B cell (primary cell): ENCODE measurements at regions of chr3 and their contacts with region 1.

Region 1: DNA sequence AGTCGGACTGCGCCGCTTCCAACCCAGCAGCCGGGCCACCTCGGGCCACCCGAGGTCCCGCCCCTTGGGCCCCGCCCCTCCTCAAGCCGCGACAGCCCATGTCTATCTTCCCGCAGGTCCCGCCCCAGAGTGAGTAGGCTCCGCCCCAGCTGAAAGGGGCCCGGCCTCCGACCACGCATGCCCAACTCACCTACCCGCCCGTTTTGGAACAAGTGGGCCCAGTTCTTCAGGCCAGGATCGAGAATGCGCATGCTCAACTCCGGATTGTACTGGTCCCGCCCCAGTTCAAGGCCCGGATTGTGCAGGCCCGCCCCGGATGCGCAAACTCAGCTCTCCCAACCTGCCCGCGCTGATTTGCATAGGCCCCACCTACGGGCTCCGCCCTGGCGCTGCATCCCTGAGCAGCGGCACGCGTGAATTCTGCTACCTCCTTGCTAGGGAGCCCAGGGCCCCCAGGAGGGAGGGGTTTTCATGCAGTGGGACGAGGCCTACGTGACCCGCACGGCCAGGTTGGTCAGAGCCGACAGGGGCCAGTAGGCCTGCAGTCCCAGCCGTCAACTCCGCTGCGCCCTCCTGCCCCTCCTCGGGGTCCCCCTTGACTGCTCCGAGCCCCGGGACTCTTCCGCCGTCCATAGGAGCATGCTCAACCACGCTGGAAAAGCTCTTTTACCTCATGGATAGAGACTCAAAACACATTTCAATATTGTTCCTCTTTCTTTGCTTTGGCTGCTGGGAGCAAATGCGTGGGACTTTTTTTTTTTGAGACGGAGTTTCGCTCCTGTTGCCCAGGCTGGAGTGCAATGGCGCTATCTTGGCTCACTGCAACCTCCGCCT is at the start of gene PFKFB4:
- DNase-seq: peak; percentile 100
- ATAC-seq: peak; percentile 89
- H3K4me3 ChIP-seq: peak within 1 kb of the TSS; percentile 53 to 73 (median 63)
- H3K4me3 Mint-ChIP-seq: peak within 1 kb of the TSS; percentile 87
- H3K27ac ChIP-seq: peak within 1 kb of the TSS; percentile 41 to 65
- H3K27ac Mint-ChIP-seq: peak within 1 kb of the TSS; percentile 80
- H3K4me1 ChIP-seq: peaks cover 16 to 40% of the 10 kb centered on the region in 2 donors
- H3K4me1 Mint-ChIP-seq: peaks cover 33% of the 10 kb centered on the region
- H3K27me3 ChIP-seq: no peaks in the 10 kb centered on the region
- H3K27me3 Mint-ChIP-seq: no peaks in the 10 kb centered on the region
- CTCF ChIP-seq: no peak
- total RNA-seq, gene PFKFB4: 3.2 and 3.3 TPM in 2 replicates

Region 2: DNA sequence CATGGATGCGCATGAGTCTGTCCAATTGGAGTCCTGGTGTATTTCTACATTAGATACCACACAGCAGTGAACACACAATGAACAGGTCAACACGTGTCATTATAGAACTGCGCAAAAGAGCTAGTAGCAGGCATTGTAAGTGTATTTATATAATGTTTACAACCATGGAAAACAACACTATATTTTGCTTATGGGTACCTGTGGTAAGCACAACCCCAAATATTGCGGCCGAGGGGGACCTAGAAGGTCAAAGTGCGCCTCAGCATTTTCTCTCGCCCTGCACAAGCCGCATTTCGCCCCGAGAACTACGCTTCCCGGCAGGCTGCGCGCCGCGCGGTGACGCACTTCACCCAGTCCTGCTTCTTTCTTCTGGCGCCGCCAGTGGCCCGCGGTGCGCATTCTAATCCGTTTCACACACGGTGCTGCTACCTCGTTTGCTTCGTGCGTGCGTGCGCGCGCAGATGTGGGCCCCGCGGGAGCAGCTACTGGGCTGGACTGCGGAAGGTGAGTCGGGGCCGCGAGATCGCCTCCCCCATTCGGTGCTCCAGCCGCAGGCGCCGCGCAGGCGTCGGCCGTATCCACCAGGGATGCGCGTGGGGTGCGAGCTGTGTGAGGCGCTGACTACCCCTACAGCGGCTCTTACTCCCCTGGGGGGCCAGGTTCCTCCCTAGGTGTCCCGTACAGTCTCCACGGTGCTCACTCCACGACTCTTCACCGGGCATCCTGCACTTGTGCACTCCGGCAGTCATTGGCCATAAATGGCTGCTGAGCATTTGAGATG is 316.1 kb before region 1 on chr3 and contains the start of gene ZNF589:
- CTCF ChIA-PET with region 1: no interaction called
- POLR2A ChIA-PET with region 1: no interaction called
- intact Hi-C with region 1: loop called (anchors 2 kb)
- DNase-seq: peak; percentile 96
- ATAC-seq: peak; percentile 95
- H3K4me3 ChIP-seq: peak within 1 kb of the TSS; percentile 69 to 95 (median 70)
- H3K4me3 Mint-ChIP-seq: peak within 1 kb of the TSS; percentile 97
- H3K27ac ChIP-seq: peak within 1 kb of the TSS; percentile 78 to 79
- H3K27ac Mint-ChIP-seq: peak within 1 kb of the TSS; percentile 98
- H3K4me1 ChIP-seq: peaks cover 3 to 24% of the 10 kb centered on the region in 2 donors
- H3K4me1 Mint-ChIP-seq: peaks cover 24% of the 10 kb centered on the region
- H3K27me3 ChIP-seq: no peaks in the 10 kb centered on the region
- H3K27me3 Mint-ChIP-seq: no peaks in the 10 kb centered on the region
- CTCF ChIP-seq: peak; percentile 29
- total RNA-seq, gene ZNF589: 29.8 and 34.7 TPM in 2 replicates

Region 3: GRCh38 chr3:48400824-48401433 is 156.1 kb before region 1 on chr3:
- CTCF ChIA-PET with region 1: interaction called, 190 read pairs
- POLR2A ChIA-PET with region 1: no interaction called
- intact Hi-C with region 1: no loop called
- DNase-seq: peak; percentile 83
- ATAC-seq: peak; percentile 89
- H3K4me3 ChIP-seq: no peak overlapping the region
- H3K4me3 Mint-ChIP-seq: no peak overlapping the region
- H3K27ac ChIP-seq: no peak overlapping the region
- H3K27ac Mint-ChIP-seq: no peak overlapping the region
- H3K4me1 ChIP-seq: no peaks in the 10 kb centered on the region
- H3K4me1 Mint-ChIP-seq: no peaks in the 10 kb centered on the region
- H3K27me3 ChIP-seq: peaks cover 0 to under 1% (median 0%) of the 10 kb centered on the region in 4 experiments
- H3K27me3 Mint-ChIP-seq: peaks cover 8% of the 10 kb centered on the region
- CTCF ChIP-seq: peak; percentile 93

Region 4: GRCh38 chr3:48472915-48473616 is 83.9 kb before region 1 on chr3:
- CTCF ChIA-PET with region 1: interaction called, 3 read pairs
- POLR2A ChIA-PET with region 1: no interaction called
- intact Hi-C with region 1: loop called (anchors 1 kb)
- DNase-seq: peak; percentile 98
- ATAC-seq: peak; percentile 91
- H3K4me3 ChIP-seq: peak overlapping the region; percentile 59 to 95 (median 74)
- H3K4me3 Mint-ChIP-seq: peak overlapping the region; percentile 93
- H3K27ac ChIP-seq: peak overlapping the region; percentile 96 to 99
- H3K27ac Mint-ChIP-seq: peak overlapping the region; percentile 99
- H3K4me1 ChIP-seq: peaks cover 62 to 76% of the 10 kb centered on the region in 2 donors
- H3K4me1 Mint-ChIP-seq: peaks cover 66% of the 10 kb centered on the region
- H3K27me3 ChIP-seq: no peaks in the 10 kb centered on the region
- H3K27me3 Mint-ChIP-seq: no peaks in the 10 kb centered on the region
- CTCF ChIP-seq: peak; percentile 56

Region 5: GRCh38 chr3:48609088-48610005 is 52.3 kb after region 1 on chr3 and contains the start of gene UQCRC1:
- CTCF ChIA-PET with region 1: interaction called, 7 read pairs
- POLR2A ChIA-PET with region 1: no interaction called
- intact Hi-C with region 1: loop called (anchors 1 kb)
- DNase-seq: peak; percentile 95
- ATAC-seq: peak; percentile 99
- H3K4me3 ChIP-seq: peak within 1 kb of the TSS; percentile 68 to 99 (median 94)
- H3K4me3 Mint-ChIP-seq: peak within 1 kb of the TSS; percentile 100
- H3K27ac ChIP-seq: peak within 1 kb of the TSS; percentile 72 to 90
- H3K27ac Mint-ChIP-seq: peak within 1 kb of the TSS; percentile 98
- H3K4me1 ChIP-seq: peaks cover 10 to 14% of the 10 kb centered on the region in 2 donors
- H3K4me1 Mint-ChIP-seq: peaks cover 15% of the 10 kb centered on the region
- H3K27me3 ChIP-seq: no peaks in the 10 kb centered on the region
- H3K27me3 Mint-ChIP-seq: no peaks in the 10 kb centered on the region
- CTCF ChIP-seq: peak; percentile 81
- total RNA-seq, gene UQCRC1: 98.9 and 99.9 TPM in 2 replicates

Region 6: DNA sequence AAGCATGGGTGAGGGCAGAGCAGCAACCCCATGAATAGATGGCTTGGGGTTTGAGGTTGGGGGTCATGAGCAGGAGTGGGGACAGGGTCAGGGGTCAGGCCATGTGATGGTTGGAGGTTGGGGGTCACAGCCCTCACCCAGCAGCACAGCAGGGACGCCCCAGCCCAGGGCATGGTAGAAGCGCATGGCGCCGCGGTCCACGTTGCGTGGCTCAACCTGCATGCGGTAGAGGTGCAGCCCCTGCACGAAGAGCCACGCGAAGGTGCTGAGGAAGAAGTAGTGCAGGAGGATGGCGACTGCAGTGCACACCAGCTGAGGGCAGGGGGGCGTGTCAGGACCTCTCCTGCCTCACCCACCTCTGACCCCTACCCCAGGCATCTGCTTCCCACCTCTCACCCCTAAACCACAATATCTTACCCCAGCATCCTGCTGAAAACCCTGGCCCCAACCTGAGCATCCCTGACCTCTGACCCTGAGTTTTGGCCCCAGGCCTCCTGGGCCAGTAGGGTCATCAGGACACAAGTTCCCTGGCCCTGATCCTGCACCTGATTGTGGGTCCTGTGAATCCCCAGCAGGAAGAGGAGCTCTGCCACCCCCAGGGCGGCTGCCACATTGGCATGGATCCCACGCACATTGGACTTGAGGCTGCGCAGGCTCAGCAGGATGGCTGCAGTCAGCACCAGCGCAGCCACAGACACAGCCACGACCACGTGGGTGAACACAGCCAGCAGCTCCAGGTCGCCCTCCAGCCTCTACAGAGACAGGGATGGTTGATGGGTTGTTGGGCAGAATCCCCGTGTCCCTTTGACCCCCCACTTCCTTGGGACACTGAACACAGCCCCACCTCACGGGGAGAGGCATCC is 88.1 kb after region 1 on chr3:
- CTCF ChIA-PET with region 1: no interaction called
- POLR2A ChIA-PET with region 1: no interaction called
- intact Hi-C with region 1: no loop called
- DNase-seq: no peak
- ATAC-seq: no peak
- H3K4me3 ChIP-seq: no peak overlapping the region
- H3K4me3 Mint-ChIP-seq: no peak overlapping the region
- H3K27ac ChIP-seq: no peak overlapping the region
- H3K27ac Mint-ChIP-seq: no peak overlapping the region
- H3K4me1 ChIP-seq: no peaks in the 10 kb centered on the region
- H3K4me1 Mint-ChIP-seq: no peaks in the 10 kb centered on the region
- H3K27me3 ChIP-seq: peaks cover 0 to 11% (median 0%) of the 10 kb centered on the region in 4 experiments
- H3K27me3 Mint-ChIP-seq: no peaks in the 10 kb centered on the region
- CTCF ChIP-seq: no peak

Region 7: GRCh38 chr3:48716982-48717746 is 160.2 kb after region 1 on chr3 and contains the start of gene IP6K2:
- CTCF ChIA-PET with region 1: no interaction called
- POLR2A ChIA-PET with region 1: no interaction called
- intact Hi-C with region 1: loop called (anchors 1 kb)
- DNase-seq: peak; percentile 97
- ATAC-seq: peak; percentile 99
- H3K4me3 ChIP-seq: peak within 1 kb of the TSS; percentile 90 to 99 (median 95)
- H3K4me3 Mint-ChIP-seq: peak within 1 kb of the TSS; percentile 98
- H3K27ac ChIP-seq: peak within 1 kb of the TSS; percentile 74 to 77
- H3K27ac Mint-ChIP-seq: peak within 1 kb of the TSS; percentile 93
- H3K4me1 ChIP-seq: peaks cover 18 to 20% of the 10 kb centered on the region in 2 donors
- H3K4me1 Mint-ChIP-seq: peaks cover 33% of the 10 kb centered on the region
- H3K27me3 ChIP-seq: no peaks in the 10 kb centered on the region
- H3K27me3 Mint-ChIP-seq: no peaks in the 10 kb centered on the region
- CTCF ChIP-seq: no peak
- total RNA-seq, gene IP6K2: 138 and 140 TPM in 2 replicates

Region 8: GRCh38 chr3:48851407-48851806 is 294.4 kb after region 1 on chr3:
- CTCF ChIA-PET with region 1: no interaction called
- POLR2A ChIA-PET with region 1: no interaction called
- intact Hi-C with region 1: no loop called
- DNase-seq: no peak
- ATAC-seq: no peak
- H3K4me3 ChIP-seq: no peak overlapping the region
- H3K4me3 Mint-ChIP-seq: no peak overlapping the region
- H3K27ac ChIP-seq: no peak overlapping the region
- H3K27ac Mint-ChIP-seq: no peak overlapping the region
- H3K4me1 ChIP-seq: peaks cover 12 to 17% of the 10 kb centered on the region in 2 donors
- H3K4me1 Mint-ChIP-seq: peaks cover 16% of the 10 kb centered on the region
- H3K27me3 ChIP-seq: no peaks in the 10 kb centered on the region
- H3K27me3 Mint-ChIP-seq: no peaks in the 10 kb centered on the region
- CTCF ChIP-seq: no peak

Region 9: DNA sequence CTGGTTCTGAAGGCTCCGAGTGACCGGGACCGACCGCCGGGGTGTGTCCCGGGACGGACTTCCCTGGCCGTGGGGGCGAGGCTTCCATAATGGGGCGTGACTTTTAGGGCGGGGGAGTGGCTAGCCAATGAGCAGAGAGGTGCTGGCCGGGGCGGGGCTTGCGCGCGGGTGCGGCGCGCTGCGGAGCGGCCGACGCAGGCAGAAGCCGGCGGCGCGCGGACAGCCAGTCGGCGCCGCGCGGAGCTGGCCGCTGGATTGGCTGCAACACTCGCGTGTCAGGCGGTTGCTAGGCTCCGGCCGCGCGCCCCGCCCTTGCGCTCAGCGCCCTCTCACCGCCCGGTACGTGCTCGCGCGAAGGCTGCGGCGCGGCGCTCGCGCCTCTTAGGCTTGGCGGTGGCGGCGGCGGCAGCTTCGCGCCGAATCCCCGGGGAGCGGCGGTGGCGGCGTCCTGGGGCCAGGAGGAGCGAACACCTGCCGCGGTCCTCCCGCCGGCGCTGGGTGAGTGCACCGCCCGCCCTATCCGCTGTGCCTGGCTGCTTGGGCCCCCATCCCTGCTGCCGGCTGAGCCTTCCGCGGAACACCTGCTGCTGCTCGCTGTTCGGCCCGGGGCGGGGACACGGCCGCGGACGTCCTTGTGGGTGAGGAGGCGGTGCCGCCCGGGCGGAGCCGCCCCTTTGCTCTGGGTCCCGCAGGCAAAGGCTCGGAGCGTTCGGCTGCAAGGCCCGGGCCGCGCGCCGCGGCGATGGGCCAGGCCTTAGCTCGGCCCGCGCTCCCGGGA is 913.1 kb after region 1 on chr3 and contains the start of gene DAG1:
- CTCF ChIA-PET with region 1: no interaction called
- POLR2A ChIA-PET with region 1: no interaction called
- intact Hi-C with region 1: loop called (anchors 2 kb)
- DNase-seq: peak; percentile 98
- ATAC-seq: peak; percentile 83
- H3K4me3 ChIP-seq: peak within 1 kb of the TSS; percentile 56 to 94 (median 70)
- H3K4me3 Mint-ChIP-seq: peak within 1 kb of the TSS; percentile 95
- H3K27ac ChIP-seq: peak within 1 kb of the TSS; percentile 90 to 94
- H3K27ac Mint-ChIP-seq: peak within 1 kb of the TSS; percentile 97
- H3K4me1 ChIP-seq: peaks cover 22 to 24% of the 10 kb centered on the region in 2 donors
- H3K4me1 Mint-ChIP-seq: peaks cover 21% of the 10 kb centered on the region
- H3K27me3 ChIP-seq: no peaks in the 10 kb centered on the region
- H3K27me3 Mint-ChIP-seq: no peaks in the 10 kb centered on the region
- CTCF ChIP-seq: no peak
- total RNA-seq, gene DAG1: 27.2 and 27.3 TPM in 2 replicates